ENCODE measurements at regions of chr21 and their contacts with region 1.

Region 1: GRCh38 chr21:37415939-37416338 is 49.4 kb downstream of the DYRK1A start:
- DNase-seq: no peak
- H3K4me3 ChIP-seq: no peak overlapping the region
- H3K27ac ChIP-seq: no peak overlapping the region
- H3K4me1 ChIP-seq: peaks cover 12 to 45% (median 31%) of the 10 kb centered on the region in 4 experiments
- H3K27me3 ChIP-seq: no peaks in the 10 kb centered on the region

Region 2: DNA sequence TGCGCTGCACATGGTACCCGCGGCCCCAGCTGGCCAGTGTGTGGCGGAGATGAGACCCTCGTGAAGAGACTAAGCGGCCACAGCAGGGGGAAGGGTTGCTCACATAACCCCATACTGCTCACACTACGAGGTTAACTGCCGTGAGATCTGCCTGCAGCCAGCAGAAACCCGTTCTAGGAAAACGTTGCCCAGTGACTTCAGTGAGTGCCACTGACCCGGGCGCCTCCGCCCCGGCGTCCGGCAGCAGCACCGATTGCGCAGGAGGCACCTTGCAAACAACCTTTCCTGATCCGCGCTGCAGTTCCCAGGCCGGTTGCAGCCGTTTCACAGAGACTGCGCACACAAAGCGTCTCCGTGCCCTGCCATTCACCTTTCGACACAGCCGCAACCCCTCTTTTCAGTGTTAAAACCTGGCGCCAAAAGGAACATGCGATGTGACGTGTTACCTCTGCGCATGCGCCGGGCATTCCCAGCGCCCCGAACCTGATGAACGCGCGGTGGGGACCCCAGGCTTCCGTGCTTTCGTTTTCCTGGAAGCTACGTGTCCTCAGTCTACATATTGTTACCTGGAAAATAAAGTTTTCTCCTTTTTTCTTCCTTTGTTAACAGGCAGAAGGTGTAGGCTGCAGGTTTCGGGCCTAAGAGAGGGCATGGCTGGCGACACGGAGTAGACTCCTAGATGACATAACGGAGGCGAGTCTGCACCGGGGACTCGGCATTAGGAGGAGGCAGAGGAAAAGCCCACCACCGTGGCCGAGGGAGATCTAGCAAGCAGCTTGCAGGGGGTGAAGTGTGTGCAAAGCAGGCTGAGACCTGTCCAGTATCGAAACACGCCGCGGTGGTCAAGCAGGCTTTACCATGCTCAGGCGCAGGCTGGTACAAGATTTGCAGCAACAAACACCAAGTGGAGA is 157.7 kb before region 1 on chr21:
- CTCF ChIA-PET with region 1: no interaction called
- POLR2A ChIA-PET with region 1: no interaction called
- DNase-seq: peak; percentile 84 to 87 (median 86)
- H3K4me3 ChIP-seq: peak overlapping the region; percentile 54 to 86 (median 72)
- H3K27ac ChIP-seq: peak overlapping the region; percentile 82 to 86
- H3K4me1 ChIP-seq: peaks cover 7 to 45% (median 23%) of the 10 kb centered on the region in 4 experiments
- H3K27me3 ChIP-seq: no peaks in the 10 kb centered on the region

Region 3: DNA sequence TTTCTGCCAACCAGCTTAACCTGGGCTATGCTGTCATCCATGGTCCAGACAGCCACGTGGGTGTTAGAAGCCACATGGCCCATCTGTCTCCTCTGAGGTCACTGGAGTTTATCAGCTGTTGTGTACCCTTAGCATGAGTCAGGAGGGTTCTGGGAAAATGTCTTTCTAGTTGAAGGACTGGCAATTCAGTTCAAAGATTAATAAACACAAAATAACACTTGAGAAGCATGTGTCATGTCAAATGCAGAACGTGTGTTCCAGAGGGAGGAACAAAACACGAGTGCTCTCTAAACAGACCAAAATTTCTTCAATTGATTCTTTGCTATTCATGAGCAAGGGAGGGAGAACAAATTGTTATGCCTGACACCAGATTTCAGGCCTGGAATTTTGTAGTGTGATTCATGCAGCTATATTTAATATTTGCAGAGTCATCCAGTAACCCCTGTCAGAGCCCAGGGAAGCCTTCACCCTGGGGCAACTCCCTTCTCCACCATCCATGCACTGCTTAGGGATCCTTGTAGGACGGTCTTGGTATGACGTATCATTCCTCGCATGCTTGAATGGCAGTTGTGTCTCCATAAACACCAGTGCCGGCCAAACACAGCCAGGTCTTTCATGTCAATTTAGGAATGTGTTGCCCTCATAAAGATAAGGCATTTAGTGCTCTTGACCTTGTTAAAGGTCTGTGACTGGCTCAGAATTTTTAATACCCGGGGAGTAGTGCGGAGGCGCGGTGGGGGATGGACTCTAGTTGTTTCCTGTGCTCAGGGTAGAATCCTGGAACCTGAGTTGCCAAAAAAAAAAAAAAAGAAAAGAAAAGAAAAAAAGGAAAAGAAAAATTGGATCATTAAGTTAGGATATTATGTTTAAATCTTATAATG is 77.0 kb before region 1 on chr21:
- CTCF ChIA-PET with region 1: no interaction called
- POLR2A ChIA-PET with region 1: no interaction called
- DNase-seq: peak in 2 of 3 donors; percentile 60 to 67
- H3K4me3 ChIP-seq: no peak overlapping the region
- H3K27ac ChIP-seq: no peak overlapping the region
- H3K4me1 ChIP-seq: peaks cover 0 to 12% (median 5%) of the 10 kb centered on the region in 4 experiments
- H3K27me3 ChIP-seq: no peaks in the 10 kb centered on the region

Region 4: GRCh38 chr21:37405629-37406028 is 10.3 kb before region 1 on chr21:
- CTCF ChIA-PET with region 1: interaction called, 10 read pairs
- POLR2A ChIA-PET with region 1: interaction called, 3 read pairs
- DNase-seq: no peak
- H3K4me3 ChIP-seq: no peak overlapping the region
- H3K27ac ChIP-seq: no peak overlapping the region
- H3K4me1 ChIP-seq: peaks cover 1 to 28% (median 15%) of the 10 kb centered on the region in 4 experiments
- H3K27me3 ChIP-seq: no peaks in the 10 kb centered on the region

Region 5: GRCh38 chr21:37455504-37455911 is 39.6 kb after region 1 on chr21:
- CTCF ChIA-PET with region 1: no interaction called
- POLR2A ChIA-PET with region 1: no interaction called
- DNase-seq: peak; percentile 51 to 90 (median 86)
- H3K4me3 ChIP-seq: no peak overlapping the region
- H3K27ac ChIP-seq: peak overlapping the region in 1 of 2 experiments; percentile 7
- H3K4me1 ChIP-seq: peaks cover 8 to 37% (median 32%) of the 10 kb centered on the region in 4 experiments
- H3K27me3 ChIP-seq: no peaks in the 10 kb centered on the region